ENCODE measurements at regions of chr13 and their contacts with region 1.

Region 1: GRCh38 chr13:29435125-29435911 is 160.2 kb downstream of the SLC7A1 start:
- DNase-seq: no peak
- ATAC-seq: peak; percentile 89

Region 2: GRCh38 chr13:29140277-29140676 is 295.0 kb before region 1 on chr13:
- intact Hi-C with region 1: no loop called
- DNase-seq: no peak
- ATAC-seq: peak; percentile 90

Region 3: GRCh38 chr13:29465741-29466293 is 30.5 kb after region 1 on chr13:
- intact Hi-C with region 1: loop called (anchors 2 kb)
- DNase-seq: peak; percentile 82
- ATAC-seq: peak; percentile 73

Region 4: GRCh38 chr13:29496240-29496712 is 61.0 kb after region 1 on chr13:
- intact Hi-C with region 1: no loop called
- DNase-seq: no peak
- ATAC-seq: peak; percentile 65

Measured in Right ventricle myocardium inferior (tissue), 1 donor.